ENCODE measurements at regions of chr15 and their contacts with region 1.

Region 1: GRCh38 chr15:44066316-44066740 is 128.7 kb downstream of the FRMD5 start:
- DNase-seq: peak; percentile 81
- H3K4me3 Mint-ChIP-seq: no peak overlapping the region
- H3K27ac Mint-ChIP-seq: no peak overlapping the region
- H3K4me1 Mint-ChIP-seq: peaks cover 4% of the 10 kb centered on the region
- H3K27me3 Mint-ChIP-seq: peaks cover 5% of the 10 kb centered on the region

Region 2: DNA sequence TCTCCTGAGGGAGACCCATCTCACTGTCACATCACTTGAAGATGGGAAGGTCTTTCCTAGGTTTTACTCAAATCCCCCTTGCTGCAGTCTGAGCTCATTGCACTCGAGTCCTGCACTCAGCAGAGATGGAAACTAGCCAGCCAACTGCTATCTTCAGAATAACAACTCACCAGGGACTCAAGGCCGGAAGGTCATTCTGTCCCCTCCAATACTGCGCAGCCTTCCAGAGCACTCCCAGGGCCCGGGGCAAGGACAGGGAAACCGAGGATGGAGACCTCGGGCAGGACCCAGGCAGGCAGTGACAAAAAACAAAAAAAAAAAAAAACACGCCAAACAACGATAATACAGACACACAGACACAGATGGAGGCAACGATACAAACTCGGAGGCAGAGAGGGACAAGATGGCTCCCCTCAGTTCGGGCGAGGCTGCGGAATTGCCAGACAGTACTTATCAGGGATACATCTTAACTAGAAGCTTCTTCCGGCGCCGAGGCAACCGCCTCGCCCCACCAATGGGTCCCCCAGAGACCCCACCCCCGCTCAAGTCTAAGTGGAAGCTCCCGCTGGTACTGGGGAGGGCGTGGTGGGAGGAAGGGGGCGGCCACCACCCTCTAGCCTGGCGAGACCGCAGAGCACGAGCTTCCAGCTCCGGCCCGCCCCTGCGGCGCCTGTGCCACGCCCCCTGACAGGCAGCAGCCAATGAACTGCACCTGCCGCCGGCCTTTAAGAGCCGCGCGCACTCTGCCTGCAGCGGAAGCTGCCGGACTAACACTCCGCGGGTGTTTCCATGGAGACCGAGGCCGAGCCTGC is 555.9 kb before region 1 on chr15:
- CTCF ChIA-PET with region 1: no interaction called
- intact Hi-C with region 1: no loop called
- DNase-seq: peak; percentile 96
- H3K4me3 Mint-ChIP-seq: peak overlapping the region; percentile 85
- H3K27ac Mint-ChIP-seq: peak overlapping the region; percentile 24
- H3K4me1 Mint-ChIP-seq: peaks cover 22% of the 10 kb centered on the region
- H3K27me3 Mint-ChIP-seq: peaks cover under 1% of the 10 kb centered on the region

Region 3: GRCh38 chr15:43903864-43904290 is 162.5 kb before region 1 on chr15:
- CTCF ChIA-PET with region 1: interaction called, 96 read pairs
- intact Hi-C with region 1: loop called (anchors 1 kb)
- DNase-seq: peak; percentile 72
- H3K4me3 Mint-ChIP-seq: no peak overlapping the region
- H3K27ac Mint-ChIP-seq: no peak overlapping the region
- H3K4me1 Mint-ChIP-seq: peaks cover 3% of the 10 kb centered on the region
- H3K27me3 Mint-ChIP-seq: no peaks in the 10 kb centered on the region

Region 4: GRCh38 chr15:43939070-43939469 is 127.3 kb before region 1 on chr15:
- CTCF ChIA-PET with region 1: interaction called, 4 read pairs
- intact Hi-C with region 1: loop called (anchors 1 kb)
- DNase-seq: peak; percentile 38
- H3K4me3 Mint-ChIP-seq: no peak overlapping the region
- H3K27ac Mint-ChIP-seq: no peak overlapping the region
- H3K4me1 Mint-ChIP-seq: no peaks in the 10 kb centered on the region
- H3K27me3 Mint-ChIP-seq: peaks cover 4% of the 10 kb centered on the region

Region 5: DNA sequence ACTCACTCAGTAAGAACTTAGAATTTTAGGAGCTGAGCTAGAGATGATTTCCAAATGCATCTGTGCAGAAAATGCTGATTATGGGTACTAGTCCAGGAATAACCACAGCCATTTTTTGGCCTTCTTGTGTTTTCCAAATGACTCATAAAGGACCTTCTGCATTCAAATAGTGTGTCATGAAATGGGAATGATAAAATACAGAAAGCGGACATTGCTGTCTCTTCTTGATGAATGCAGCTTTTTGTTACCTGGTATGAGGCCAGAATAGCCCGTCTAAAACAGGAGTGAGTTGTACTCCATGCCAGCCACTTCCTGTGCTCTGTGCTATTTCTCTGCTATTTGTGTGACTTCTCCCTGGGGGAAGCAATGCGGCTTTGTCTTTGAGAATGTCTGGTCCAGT is 149.3 kb after region 1 on chr15:
- CTCF ChIA-PET with region 1: no interaction called
- intact Hi-C with region 1: loop called (anchors 10 kb)
- DNase-seq: no peak
- H3K4me3 Mint-ChIP-seq: no peak overlapping the region
- H3K27ac Mint-ChIP-seq: no peak overlapping the region
- H3K4me1 Mint-ChIP-seq: peaks cover 2% of the 10 kb centered on the region
- H3K27me3 Mint-ChIP-seq: peaks cover 15% of the 10 kb centered on the region